Caki2 (cell line): ENCODE measurements at regions of chr12 and their contacts with region 1.

Region 1: GRCh38 chr12:62799126-62799736 is 135.7 kb downstream of the PPM1H start:
- DNase-seq: peak; percentile 55

Region 2: DNA sequence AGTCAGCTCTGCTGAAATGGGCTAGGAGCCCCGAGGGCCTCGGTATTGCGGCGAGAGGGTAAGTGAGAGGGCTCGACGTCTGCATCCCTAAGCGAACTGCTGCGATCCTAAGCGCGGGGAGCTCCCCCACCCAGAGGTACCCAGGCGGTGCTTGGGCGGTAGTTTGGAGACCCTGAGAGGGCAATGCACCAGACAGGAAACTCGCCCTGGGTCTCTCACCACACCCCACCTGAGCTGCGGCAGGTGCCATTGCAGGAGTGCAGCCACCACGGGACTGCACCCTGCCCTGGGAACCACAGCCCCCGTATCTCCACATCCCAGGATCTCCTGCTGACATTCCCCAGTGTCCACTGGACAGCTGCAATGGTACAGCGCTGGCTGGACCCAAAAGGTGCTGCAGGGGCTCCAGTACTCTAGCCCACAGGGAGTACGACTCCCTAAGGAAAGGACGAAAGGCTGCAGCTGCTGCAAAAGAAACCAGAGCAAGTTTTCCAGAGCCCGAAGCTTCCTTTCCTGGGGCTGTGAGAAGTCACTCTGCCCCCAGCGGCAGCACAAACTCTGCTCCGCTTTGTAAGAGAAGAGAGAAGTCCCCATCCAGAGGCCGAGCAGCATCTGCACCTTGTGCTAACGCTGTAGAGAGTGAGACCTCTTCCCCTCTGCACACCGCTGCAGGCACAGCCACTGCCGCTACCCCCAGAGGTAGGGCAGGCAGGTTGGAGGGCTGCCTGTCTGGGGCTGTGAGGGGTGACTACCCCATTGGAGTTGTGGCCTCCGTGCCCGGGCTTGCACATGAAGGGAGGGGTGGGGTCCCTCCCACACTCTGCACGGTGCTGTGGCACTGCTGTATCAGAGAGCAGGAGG is 363.7 kb before region 1 on chr12:
- in situ Hi-C with region 1: loop called (anchors 25 kb)
- DNase-seq: peak; percentile 21